H1 (cell line): ENCODE measurements at regions of chr6 and their contacts with region 1.

Region 1: GRCh38 chr6:167255918-167256553 is 35.1 kb upstream of the UNC93A start:
- DNase-seq: peak in 1 of 2 experiments; percentile 49
- H3K4me3 ChIP-seq: no peak overlapping the region
- H3K27ac ChIP-seq: no peak overlapping the region
- H3K4me1 ChIP-seq: no peaks in the 10 kb centered on the region
- H3K27me3 ChIP-seq: no peaks in the 10 kb centered on the region
- CTCF ChIP-seq: peak in 2 of 3 experiments; percentile 49 to 53; a peak in 3 of 4 replicates
- EP300 ChIP-seq: no peak
- POLR2A ChIP-seq: no peak
- RAD21 ChIP-seq: peak; percentile 53 to 62

Region 2: DNA sequence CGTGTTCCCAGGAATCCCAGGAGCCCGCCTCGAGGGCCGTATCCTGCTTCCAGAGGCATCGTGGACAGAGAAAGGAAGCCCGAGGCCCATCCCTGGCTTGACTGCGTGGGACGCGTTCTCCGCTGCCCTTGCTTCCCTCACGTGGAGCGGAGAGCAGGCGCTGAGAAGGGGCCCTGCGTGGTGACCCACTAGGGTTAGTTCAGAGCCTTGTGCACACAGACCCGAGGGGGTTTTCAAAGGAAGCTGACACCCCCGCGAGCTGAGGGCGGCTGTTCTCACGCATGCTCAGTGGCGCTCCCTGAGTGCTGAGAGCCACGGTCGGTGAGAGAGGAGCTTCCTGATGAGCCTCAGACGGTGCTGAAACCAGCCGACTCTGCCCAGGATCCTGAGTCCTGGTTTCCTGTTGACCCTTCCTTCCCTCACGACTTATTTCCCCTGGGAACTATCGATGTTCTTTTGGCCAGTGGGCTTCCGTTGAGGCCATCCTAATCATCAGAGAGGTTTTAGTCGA is 162.1 kb before region 1 on chr6:
- CTCF ChIA-PET with region 1: no interaction called
- POLR2A ChIA-PET with region 1: no interaction called
- DNase-seq: no peak
- H3K4me3 ChIP-seq: no peak overlapping the region
- H3K27ac ChIP-seq: no peak overlapping the region
- H3K4me1 ChIP-seq: peaks cover 0 to 7% (median 1%) of the 10 kb centered on the region in 4 experiments; a peak in 2 of 7 replicates
- H3K27me3 ChIP-seq: no peaks in the 10 kb centered on the region
- CTCF ChIP-seq: no peak
- EP300 ChIP-seq: no peak
- POLR2A ChIP-seq: no peak
- RAD21 ChIP-seq: no peak

Region 3: DNA sequence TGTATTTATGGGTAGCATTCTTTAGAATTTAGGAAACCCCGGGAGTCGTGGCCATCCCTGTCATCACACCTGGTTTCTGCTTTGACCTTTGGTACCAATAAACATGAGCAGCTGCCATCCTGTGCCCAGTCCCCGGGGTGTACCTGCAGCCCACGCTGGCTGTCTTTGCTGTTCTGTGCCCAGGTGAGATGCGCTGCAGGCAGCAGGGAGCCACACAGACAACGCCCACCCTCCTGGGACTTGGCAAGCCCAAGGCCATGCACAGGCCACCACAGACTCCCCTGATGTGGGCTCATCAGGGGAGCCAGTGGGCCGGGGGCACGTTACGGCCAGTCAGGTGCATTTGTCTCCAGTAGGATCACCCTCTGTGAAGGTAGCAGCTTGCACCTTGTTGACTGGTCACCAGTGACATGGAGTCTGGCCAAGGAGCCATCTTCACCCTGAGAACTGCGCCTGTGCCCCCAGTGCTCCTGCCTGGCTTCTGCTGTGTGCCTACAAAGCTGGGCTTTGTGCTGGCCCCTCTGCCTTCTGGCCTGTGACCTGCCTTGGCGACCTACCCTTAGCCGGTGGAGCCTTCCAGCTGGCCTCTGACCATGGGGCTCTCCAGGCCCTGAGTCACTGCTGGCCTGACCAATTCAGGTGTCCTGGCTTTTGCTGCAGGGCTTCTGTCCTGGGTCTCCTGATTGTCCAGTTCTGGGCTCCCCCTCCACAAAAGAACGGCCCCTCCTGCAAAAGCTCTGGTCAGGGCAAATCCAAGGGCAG is 20.9 kb after region 1 on chr6:
- CTCF ChIA-PET with region 1: interaction called, 12 read pairs
- POLR2A ChIA-PET with region 1: interaction called, 3 read pairs
- DNase-seq: no peak
- H3K4me3 ChIP-seq: no peak overlapping the region
- H3K27ac ChIP-seq: no peak overlapping the region
- H3K4me1 ChIP-seq: peaks cover 3 to 19% (median 15%) of the 10 kb centered on the region in 4 experiments
- H3K27me3 ChIP-seq: peaks cover 0 to 4% (median 0%) of the 10 kb centered on the region in 4 experiments; a peak in 3 of 7 replicates
- CTCF ChIP-seq: no peak
- EP300 ChIP-seq: no peak
- POLR2A ChIP-seq: no peak
- RAD21 ChIP-seq: no peak